ENCODE measurements at regions of chr2 and their contacts with region 1.

Region 1: GRCh38 chr2:120680136-120680761 is 55.4 kb upstream of the GLI2 start:
- DNase-seq: peak; percentile 50 to 64 (median 63)
- H3K4me3 ChIP-seq: no peak overlapping the region
- H3K4me3 Mint-ChIP-seq: no peak overlapping the region
- H3K27ac ChIP-seq: no peak overlapping the region
- H3K27ac Mint-ChIP-seq: no peak overlapping the region
- H3K4me1 ChIP-seq: no peaks in the 10 kb centered on the region
- H3K4me1 Mint-ChIP-seq: no peaks in the 10 kb centered on the region
- H3K27me3 ChIP-seq: peaks cover 0 to 4% of the 10 kb centered on the region in 2 donors
- H3K27me3 Mint-ChIP-seq: peaks cover 3 to 33% (median 6%) of the 10 kb centered on the region in 3 donors
- CTCF ChIP-seq: peak; percentile 55

Region 2: DNA sequence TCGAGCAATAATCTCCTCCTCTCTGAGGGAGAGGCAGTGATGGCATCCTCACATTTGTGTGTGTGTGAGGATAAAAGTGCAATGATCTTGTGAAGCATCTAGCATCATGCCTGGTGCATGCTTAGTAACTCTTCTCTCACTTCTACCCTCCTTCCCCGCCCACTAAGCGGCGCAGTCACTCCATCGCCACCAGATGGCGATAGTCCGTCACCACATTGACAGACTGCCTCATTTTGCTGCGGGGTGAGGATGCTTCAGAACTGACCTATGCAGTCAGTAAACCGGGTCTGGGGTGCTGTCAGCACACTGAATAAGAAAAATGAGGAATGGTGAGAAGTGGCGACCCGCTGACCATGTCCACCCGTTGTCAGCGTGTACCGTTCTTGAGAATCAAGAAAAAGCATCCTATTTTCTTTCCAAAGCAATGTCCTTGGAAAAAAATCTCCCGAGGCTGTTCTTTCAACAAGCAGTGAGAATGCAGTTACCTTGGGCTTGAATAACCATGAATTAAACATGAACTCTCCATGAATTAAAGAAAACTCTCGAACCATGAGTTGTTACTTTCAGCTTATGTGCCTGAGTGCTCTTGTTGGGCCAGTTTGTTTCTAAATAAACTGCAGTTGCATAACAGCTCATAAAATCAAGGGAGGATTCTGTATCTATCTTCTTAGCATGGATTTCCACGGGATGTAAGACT is 1038.5 kb before region 1 on chr2:
- intact Hi-C with region 1: loop called in 1 of 2 experiments (anchors 5 kb)
- DNase-seq: peak; percentile 56 to 73 (median 60)
- H3K4me3 ChIP-seq: no peak overlapping the region
- H3K4me3 Mint-ChIP-seq: no peak overlapping the region
- H3K27ac ChIP-seq: no peak overlapping the region
- H3K27ac Mint-ChIP-seq: peak overlapping the region in 1 of 7 donors; percentile 15
- H3K4me1 ChIP-seq: peaks cover 3 to 7% of the 10 kb centered on the region in 2 donors
- H3K4me1 Mint-ChIP-seq: peaks cover 8% of the 10 kb centered on the region
- H3K27me3 ChIP-seq: no peaks in the 10 kb centered on the region
- H3K27me3 Mint-ChIP-seq: peaks cover 0 to 3% (median 1%) of the 10 kb centered on the region in 3 donors
- CTCF ChIP-seq: peak; percentile 88

Region 3: GRCh38 chr2:120343433-120344105 is 336.7 kb before region 1 on chr2:
- intact Hi-C with region 1: loop called (anchors 10 kb)
- DNase-seq: peak; percentile 51 to 70 (median 63)
- H3K4me3 ChIP-seq: no peak overlapping the region
- H3K4me3 Mint-ChIP-seq: peak overlapping the region; percentile 45 to 82
- H3K27ac ChIP-seq: no peak overlapping the region
- H3K27ac Mint-ChIP-seq: no peak overlapping the region
- H3K4me1 ChIP-seq: peaks cover 46 to 57% of the 10 kb centered on the region in 2 donors
- H3K4me1 Mint-ChIP-seq: peaks cover 38% of the 10 kb centered on the region
- H3K27me3 ChIP-seq: peaks cover 42 to 61% of the 10 kb centered on the region in 2 donors
- H3K27me3 Mint-ChIP-seq: peaks cover 45 to 63% (median 58%) of the 10 kb centered on the region in 3 donors
- CTCF ChIP-seq: peak; percentile 68